ENCODE measurements at regions of chr2 and their contacts with region 1.

Region 1: DNA sequence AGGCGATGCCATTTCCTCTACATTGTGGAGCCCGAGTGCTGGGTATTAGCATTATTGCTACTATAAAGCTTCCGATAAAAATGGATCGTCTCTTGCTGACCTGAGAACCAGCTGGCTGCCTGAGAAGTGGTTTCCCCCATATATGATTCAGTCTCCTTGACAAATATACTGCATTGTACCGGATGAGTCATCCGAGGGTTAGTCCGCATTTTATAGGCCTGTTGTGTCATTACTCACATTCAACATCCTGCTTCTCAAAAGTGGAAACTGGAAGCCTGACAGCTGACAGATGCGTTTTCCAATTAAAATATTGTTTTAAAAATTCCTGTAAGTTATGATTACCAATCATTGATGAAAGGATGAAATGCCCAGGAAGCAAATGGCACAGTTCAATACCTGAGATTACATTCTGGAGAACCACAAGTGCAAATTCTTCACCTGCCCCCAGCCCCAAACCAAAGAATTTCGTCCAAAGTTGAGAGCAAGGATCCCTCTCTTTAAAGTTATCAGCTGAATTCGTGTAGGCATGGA is 65.7 kb downstream of the SPRED2 start:
- DNase-seq: no peak
- H3K4me3 Mint-ChIP-seq: no peak overlapping the region
- H3K27ac Mint-ChIP-seq: no peak overlapping the region
- H3K4me1 Mint-ChIP-seq: peaks cover 43% of the 10 kb centered on the region
- H3K27me3 Mint-ChIP-seq: peaks cover 2% of the 10 kb centered on the region

Region 2: GRCh38 chr2:65300761-65301711 is 65.6 kb before region 1 on chr2:
- intact Hi-C with region 1: no loop called
- DNase-seq: peak; percentile 59
- H3K4me3 Mint-ChIP-seq: peak overlapping the region; percentile 58
- H3K27ac Mint-ChIP-seq: peak overlapping the region; percentile 94
- H3K4me1 Mint-ChIP-seq: peaks cover 53% of the 10 kb centered on the region
- H3K27me3 Mint-ChIP-seq: peaks cover 37% of the 10 kb centered on the region

Region 3: GRCh38 chr2:65377556-65378192 is 11.0 kb after region 1 on chr2:
- intact Hi-C with region 1: loop called (anchors 1 kb)
- DNase-seq: no peak
- H3K4me3 Mint-ChIP-seq: peak overlapping the region; percentile 12
- H3K27ac Mint-ChIP-seq: peak overlapping the region; percentile 19
- H3K4me1 Mint-ChIP-seq: peaks cover 64% of the 10 kb centered on the region
- H3K27me3 Mint-ChIP-seq: peaks cover 8% of the 10 kb centered on the region

Region 4: GRCh38 chr2:65437392-65438135 is 70.9 kb after region 1 on chr2:
- intact Hi-C with region 1: no loop called
- DNase-seq: no peak
- H3K4me3 Mint-ChIP-seq: peak overlapping the region; percentile 87
- H3K27ac Mint-ChIP-seq: no peak overlapping the region
- H3K4me1 Mint-ChIP-seq: peaks cover 27% of the 10 kb centered on the region
- H3K27me3 Mint-ChIP-seq: peaks cover 49% of the 10 kb centered on the region

Measured in activated T-helper 1 cell treated with anti-CD3 and anti-CD28 coated beads, Interleukin-12 subunit alpha, Interleukin-12 subunit beta, Interleukin-2, Interleukin-4 antibody, amounts not matched to agents 30 ng/mL and 10 ng/mL and 1 ng/mL, durations not matched to agents 14 hours and 24 hours and 36 hours (primary cell).